HEK293 (cell line): ENCODE measurements at regions of chr7 and their contacts with region 1.

Region 1: GRCh38 chr7:2471396-2471795 is 4.8 kb downstream of the GRIFIN start:
- H3K4me3 ChIP-seq: no peak overlapping the region
- H3K27ac ChIP-seq: 0 out of 2 replicates have a peak overlapping the region, but pooled peaks have one; percentile 3
- H3K4me1 ChIP-seq: no peaks in the 10 kb centered on the region
- CTCF ChIP-seq: no peak

Region 2: GRCh38 chr7:2482725-2483451 is 11.5 kb after region 1 on chr7:
- CTCF ChIA-PET with region 1: interaction called, 10 read pairs
- POLR2A ChIA-PET with region 1: no interaction called
- H3K4me3 ChIP-seq: no peak overlapping the region
- H3K27ac ChIP-seq: no peak overlapping the region
- H3K4me1 ChIP-seq: no peaks in the 10 kb centered on the region
- CTCF ChIP-seq: no peak